ENCODE measurements at regions of chr20 and their contacts with region 1.

Region 1: GRCh38 chr20:4272225-4272624 is 256.9 kb upstream of the RNF24 start:
- DNase-seq: no peak
- ATAC-seq: no peak
- H3K4me3 ChIP-seq: no peak overlapping the region
- H3K27ac ChIP-seq: no peak overlapping the region
- H3K4me1 ChIP-seq: no peaks in the 10 kb centered on the region
- H3K27me3 ChIP-seq: no peaks in the 10 kb centered on the region
- CTCF ChIP-seq: no peak

Region 2: DNA sequence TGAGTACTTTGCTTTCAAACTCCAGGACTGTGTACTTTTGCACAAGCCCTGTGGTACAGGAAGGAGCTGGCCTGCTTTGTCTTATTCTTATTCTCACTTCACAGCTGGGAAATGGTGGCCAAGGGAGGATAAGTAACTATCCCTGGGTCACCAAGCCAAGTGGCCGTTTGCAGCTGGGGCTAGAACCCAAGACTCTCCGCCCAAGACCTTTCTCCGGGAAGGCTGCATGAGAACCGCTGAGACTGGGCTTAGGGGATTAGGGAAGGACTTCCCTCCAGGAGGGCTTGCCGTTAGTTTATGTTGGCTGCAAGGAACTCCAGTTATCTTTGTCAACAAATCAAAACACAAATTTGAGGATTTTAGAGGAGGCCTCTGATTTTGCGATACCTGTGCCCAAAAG is 86.3 kb after region 1 on chr20:
- intact Hi-C with region 1: loop called in 1 of 2 experiments (anchors 10 kb)
- DNase-seq: no peak
- ATAC-seq: no peak
- H3K4me3 ChIP-seq: no peak overlapping the region
- H3K27ac ChIP-seq: no peak overlapping the region
- H3K4me1 ChIP-seq: no peaks in the 10 kb centered on the region
- H3K27me3 ChIP-seq: peaks cover 0 to 3% (median 0%) of the 10 kb centered on the region in 3 donors
- CTCF ChIP-seq: no peak

Measured in psoas muscle (tissue), 8 donors.